ENCODE measurements at regions of chr4 and their contacts with region 1.

Region 1: DNA sequence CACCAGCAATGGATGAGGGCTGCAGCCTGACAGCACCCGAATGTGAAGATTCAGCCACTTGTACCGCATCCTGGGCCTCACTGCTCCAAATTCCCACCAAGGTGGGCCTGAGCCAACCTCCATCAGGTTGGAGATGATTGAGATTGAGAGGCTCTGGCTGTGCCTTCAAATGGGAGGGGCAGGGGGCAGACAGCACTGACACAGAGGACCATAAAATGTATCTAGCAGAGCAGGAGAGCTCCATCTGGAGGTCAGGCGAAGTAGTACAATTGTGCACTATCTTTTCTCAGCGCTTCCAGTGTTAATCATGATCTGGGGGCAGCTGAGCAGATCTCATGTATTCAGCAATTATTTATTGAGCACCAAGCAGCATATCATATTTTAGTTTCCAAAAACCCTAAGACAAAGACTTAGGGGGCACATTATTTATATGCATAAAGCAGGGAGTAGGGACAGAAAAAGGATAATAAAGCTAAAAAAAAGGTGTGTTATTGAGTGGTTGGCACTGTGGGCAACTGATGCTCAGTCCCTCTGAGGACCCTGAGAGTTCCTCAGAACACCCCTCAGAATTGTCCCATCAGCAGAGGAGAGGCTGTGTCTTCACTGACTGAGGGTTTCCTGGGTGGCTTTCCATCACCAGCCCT is 31.6 kb upstream of the C1QTNF7 start:
- DNase-seq: peak; percentile 22 to 41
- ATAC-seq: peak in 1 of 2 experiments; percentile 85; a peak in 3 of 6 replicates
- H3K4me3 ChIP-seq: no peak overlapping the region
- H3K27ac ChIP-seq: no peak overlapping the region
- H3K4me1 ChIP-seq: 0 out of 3 replicates have a peak, but pooled peaks cover 3% of the 10 kb centered on the region
- CTCF ChIP-seq: peak; percentile 45
- EP300 ChIP-seq: no peak
- POLR2A ChIP-seq: no peak
- RAD21 ChIP-seq: peak; percentile 53 to 63

Region 2: GRCh38 chr4:14871676-14872430 is 524.4 kb before region 1 on chr4:
- CTCF ChIA-PET with region 1: no interaction called
- POLR2A ChIA-PET with region 1: no interaction called
- DNase-seq: peak in 1 of 2 experiments; percentile 25
- ATAC-seq: peak in 1 of 2 experiments; percentile 73; a peak in 3 of 6 replicates
- H3K4me3 ChIP-seq: no peak overlapping the region
- H3K27ac ChIP-seq: no peak overlapping the region
- H3K4me1 ChIP-seq: no peaks in the 10 kb centered on the region
- CTCF ChIP-seq: no peak
- EP300 ChIP-seq: no peak
- POLR2A ChIP-seq: no peak
- RAD21 ChIP-seq: peak in 1 of 2 experiments; percentile 37; a peak in 2 of 5 replicates

Region 3: DNA sequence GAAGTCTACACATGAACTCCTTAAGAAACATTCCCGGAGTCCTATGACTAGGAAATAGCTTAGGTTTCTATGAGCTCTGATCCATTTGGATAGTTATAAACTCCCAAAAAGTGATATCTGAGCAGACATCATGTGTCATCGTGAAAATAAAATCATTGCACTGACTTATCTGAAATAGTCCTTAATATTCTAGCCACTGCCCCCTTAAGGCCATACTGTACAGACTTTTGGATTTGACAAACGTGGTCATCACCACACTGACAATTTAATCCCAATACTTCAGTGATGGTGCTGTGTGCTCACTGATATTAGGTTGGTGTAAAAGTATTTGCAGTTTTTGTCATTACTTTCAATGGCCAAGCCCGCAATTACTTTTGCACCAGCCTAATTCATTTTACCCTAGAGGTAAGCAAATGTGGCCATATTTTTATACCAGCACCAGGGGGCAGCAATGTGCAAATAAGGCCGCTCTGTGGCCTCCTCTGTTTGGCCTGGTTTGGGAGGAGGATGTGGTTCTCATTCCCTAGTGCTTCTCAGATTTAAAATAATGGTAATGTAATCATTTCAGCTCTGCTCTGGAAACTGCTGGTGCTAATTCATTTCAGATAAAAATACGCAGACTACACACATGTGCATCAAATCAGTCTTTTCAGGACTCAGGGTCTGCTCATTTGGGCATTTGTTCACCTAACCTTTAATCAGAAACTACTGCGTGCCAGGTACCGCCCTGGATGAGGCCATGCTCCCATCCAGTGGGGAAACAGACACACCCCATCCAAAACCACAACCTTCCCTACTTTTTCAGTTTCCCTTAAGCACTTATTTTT is 164.8 kb before region 1 on chr4:
- CTCF ChIA-PET with region 1: interaction called, 15 read pairs
- POLR2A ChIA-PET with region 1: no interaction called
- DNase-seq: peak; percentile 34 to 69
- ATAC-seq: peak; percentile 82 to 94; a peak in 5 of 6 replicates
- H3K4me3 ChIP-seq: no peak overlapping the region
- H3K27ac ChIP-seq: no peak overlapping the region
- H3K4me1 ChIP-seq: no peaks in the 10 kb centered on the region
- CTCF ChIP-seq: peak; percentile 51
- EP300 ChIP-seq: no peak
- POLR2A ChIP-seq: no peak
- RAD21 ChIP-seq: peak; percentile 61 to 63

Region 4: DNA sequence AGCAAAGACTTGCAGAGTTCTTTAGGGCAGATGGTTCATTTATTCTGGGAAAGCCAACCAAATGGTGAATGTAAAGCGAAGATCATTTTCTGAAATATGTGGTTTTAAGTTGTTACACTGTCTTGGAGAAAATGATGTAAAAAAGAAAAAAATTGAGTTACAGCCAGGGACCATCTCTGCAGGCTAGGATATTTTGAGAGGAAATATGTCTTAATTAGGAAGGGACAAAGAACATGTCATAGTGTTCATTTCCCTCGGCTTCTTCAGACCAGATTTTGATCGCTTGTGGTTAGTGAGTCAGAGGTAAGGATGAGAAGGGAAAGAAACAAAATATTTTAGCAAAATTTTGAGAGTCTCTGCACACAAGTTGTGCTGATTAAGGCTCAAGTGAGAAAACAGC is 27.4 kb before region 1 on chr4:
- CTCF ChIA-PET with region 1: no interaction called
- POLR2A ChIA-PET with region 1: no interaction called
- DNase-seq: no peak
- ATAC-seq: no peak
- H3K4me3 ChIP-seq: no peak overlapping the region
- H3K27ac ChIP-seq: no peak overlapping the region
- H3K4me1 ChIP-seq: no peaks in the 10 kb centered on the region
- CTCF ChIP-seq: no peak
- EP300 ChIP-seq: no peak
- POLR2A ChIP-seq: no peak
- RAD21 ChIP-seq: no peak

Region 5: GRCh38 chr4:15385928-15386327 is 10.4 kb before region 1 on chr4:
- CTCF ChIA-PET with region 1: interaction called, 13 read pairs
- POLR2A ChIA-PET with region 1: no interaction called
- DNase-seq: no peak
- ATAC-seq: no peak
- H3K4me3 ChIP-seq: no peak overlapping the region
- H3K27ac ChIP-seq: no peak overlapping the region
- H3K4me1 ChIP-seq: no peaks in the 10 kb centered on the region
- CTCF ChIP-seq: no peak
- EP300 ChIP-seq: no peak
- POLR2A ChIP-seq: no peak
- RAD21 ChIP-seq: no peak